Pancreas (tissue), 10 donors: ENCODE measurements at regions of chr15 and their contacts with region 1.

Region 1: DNA sequence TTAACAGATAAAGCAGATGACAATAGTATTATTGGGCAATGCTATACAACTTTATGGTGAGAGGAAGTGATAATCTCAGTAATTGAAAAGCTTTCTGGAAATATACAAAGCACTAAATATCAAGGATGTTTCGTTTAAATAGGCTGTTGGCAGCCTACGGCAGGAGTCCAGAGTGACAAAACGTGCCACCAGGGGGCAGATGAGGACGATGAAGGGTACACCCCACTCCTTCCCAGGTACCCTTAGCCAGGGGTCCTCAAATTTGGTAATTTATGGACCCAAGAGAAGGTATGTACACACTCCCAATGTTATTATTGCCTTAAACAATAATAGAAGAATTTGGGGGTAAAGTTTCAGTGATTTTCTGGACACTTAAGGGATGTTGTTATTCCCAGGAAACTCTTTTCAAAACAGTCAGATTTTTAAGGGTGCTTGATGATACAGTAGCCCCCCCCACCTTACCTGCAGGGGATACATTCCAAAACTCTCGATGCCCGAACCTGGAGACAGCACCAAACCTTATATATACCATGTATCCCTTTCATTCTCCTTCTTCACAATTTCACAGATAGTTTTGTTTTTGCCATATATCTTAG is 1.4 kb upstream of the MAGEL2 start:
- DNase-seq: peak in 5 of 6 donors; percentile 24 to 78 (median 46)
- ATAC-seq: peak; percentile 51 to 77 (median 75)
- H3K4me3 ChIP-seq: no peak overlapping the region
- H3K27ac ChIP-seq: no peak overlapping the region
- H3K4me1 ChIP-seq: no peaks in the 10 kb centered on the region
- H3K27me3 ChIP-seq: peaks cover 0 to 11% (median 0%) of the 10 kb centered on the region in 4 donors
- CTCF ChIP-seq: peak in 3 of 4 donors; percentile 40 to 53 (median 43)

Region 2: DNA sequence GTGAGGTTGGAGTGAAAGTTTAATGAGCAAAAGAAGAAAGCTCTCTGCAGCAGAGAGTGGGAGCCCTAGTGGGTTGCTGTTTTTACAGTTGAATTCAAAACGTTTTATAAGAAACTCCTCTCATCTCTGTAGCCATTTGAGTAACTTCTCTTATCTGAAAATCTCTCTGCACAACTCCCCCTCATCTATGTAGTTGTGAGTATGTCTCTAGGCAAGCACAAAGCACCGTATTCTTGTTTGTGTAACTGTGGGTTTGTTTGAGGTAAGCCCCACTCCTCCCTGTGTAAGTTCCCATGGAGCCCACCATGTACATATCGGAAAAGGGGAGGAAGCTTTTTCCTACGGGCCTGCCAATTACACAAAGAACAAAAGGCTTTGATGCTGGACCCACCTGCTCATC is 145.4 kb before region 1 on chr15:
- intact Hi-C with region 1: no loop called
- DNase-seq: no peak
- ATAC-seq: no peak
- H3K4me3 ChIP-seq: no peak overlapping the region
- H3K27ac ChIP-seq: no peak overlapping the region
- H3K4me1 ChIP-seq: no peaks in the 10 kb centered on the region
- H3K27me3 ChIP-seq: no peaks in the 10 kb centered on the region
- CTCF ChIP-seq: no peak

Region 3: GRCh38 chr15:23532019-23532418 is 117.0 kb before region 1 on chr15:
- intact Hi-C with region 1: no loop called
- DNase-seq: peak in 4 of 6 donors; percentile 46 to 79 (median 60)
- ATAC-seq: peak; percentile 89 to 94 (median 90)
- H3K4me3 ChIP-seq: no peak overlapping the region
- H3K27ac ChIP-seq: no peak overlapping the region
- H3K4me1 ChIP-seq: no peaks in the 10 kb centered on the region
- H3K27me3 ChIP-seq: no peaks in the 10 kb centered on the region
- CTCF ChIP-seq: no peak

Region 4: DNA sequence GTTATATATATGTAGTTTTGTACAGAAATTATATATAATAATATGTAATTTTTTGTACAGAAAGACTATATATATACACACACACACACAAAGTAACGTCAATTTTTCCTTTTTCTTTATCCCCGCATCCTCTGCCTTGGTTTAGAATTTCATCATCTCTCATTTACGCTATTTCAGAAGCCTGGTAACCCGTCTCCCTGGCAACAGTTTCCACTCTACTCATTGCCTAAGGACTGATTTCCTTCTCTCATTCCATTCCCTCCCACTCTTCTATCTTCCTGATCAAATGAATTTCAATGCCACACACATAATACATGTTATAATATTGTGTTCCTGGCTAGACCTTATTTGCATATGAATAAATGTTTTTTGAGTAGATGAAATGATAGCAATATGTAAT is 85.8 kb after region 1 on chr15:
- intact Hi-C with region 1: no loop called
- DNase-seq: no peak
- ATAC-seq: no peak
- H3K4me3 ChIP-seq: no peak overlapping the region
- H3K27ac ChIP-seq: no peak overlapping the region
- H3K4me1 ChIP-seq: no peaks in the 10 kb centered on the region
- H3K27me3 ChIP-seq: no peaks in the 10 kb centered on the region
- CTCF ChIP-seq: no peak

Region 5: GRCh38 chr15:23866832-23867231 is 217.8 kb after region 1 on chr15:
- intact Hi-C with region 1: loop called in 1 of 3 experiments (anchors 5 kb)
- DNase-seq: no peak
- ATAC-seq: peak in 2 of 4 donors; percentile 45 to 47
- H3K4me3 ChIP-seq: no peak overlapping the region
- H3K27ac ChIP-seq: no peak overlapping the region
- H3K4me1 ChIP-seq: no peaks in the 10 kb centered on the region
- H3K27me3 ChIP-seq: peaks cover 0 to 8% (median 0%) of the 10 kb centered on the region in 4 donors
- CTCF ChIP-seq: no peak

Region 6: GRCh38 chr15:23877502-23878412 is 228.7 kb after region 1 on chr15:
- intact Hi-C with region 1: loop called in 1 of 3 experiments (anchors 5 kb)
- DNase-seq: peak; percentile 61 to 88 (median 77)
- ATAC-seq: peak; percentile 96 to 100 (median 98)
- H3K4me3 ChIP-seq: no peak overlapping the region
- H3K27ac ChIP-seq: no peak overlapping the region
- H3K4me1 ChIP-seq: no peaks in the 10 kb centered on the region
- H3K27me3 ChIP-seq: peaks cover 0 to 5% (median 0%) of the 10 kb centered on the region in 4 donors
- CTCF ChIP-seq: peak; percentile 61 to 69 (median 65)